Stomach (tissue), 19 donors: ENCODE measurements at regions of chr17 and their contacts with region 1.

Region 1: GRCh38 chr17:28494445-28495188 is 11.5 kb upstream of the FOXN1 start:
- DNase-seq: peak; percentile 80 to 89
- H3K4me3 ChIP-seq: no peak overlapping the region
- H3K27ac ChIP-seq: no peak overlapping the region
- H3K4me1 ChIP-seq: peaks cover 0 to 14% (median 7%) of the 10 kb centered on the region in 4 donors
- H3K27me3 ChIP-seq: peaks cover 0 to 32% (median 0%) of the 10 kb centered on the region in 3 donors
- CTCF ChIP-seq: peak in 5 of 7 experiments; percentile 76 to 94 (median 86)
- EP300 ChIP-seq: no peak
- POLR2A ChIP-seq: no peak

Region 2: GRCh38 chr17:28327031-28327607 is 167.5 kb before region 1 on chr17:
- intact Hi-C with region 1: no loop called
- DNase-seq: peak in 1 of 2 donors; percentile 16
- H3K4me3 ChIP-seq: no peak overlapping the region
- H3K27ac ChIP-seq: peak overlapping the region; percentile 12 to 81 (median 68)
- H3K4me1 ChIP-seq: peaks cover 16 to 54% (median 26%) of the 10 kb centered on the region in 4 donors
- H3K27me3 ChIP-seq: no peaks in the 10 kb centered on the region
- CTCF ChIP-seq: no peak
- EP300 ChIP-seq: no peak
- POLR2A ChIP-seq: no peak

Region 3: GRCh38 chr17:28536532-28537238 is 42.1 kb after region 1 on chr17:
- intact Hi-C with region 1: loop called (anchors 5 kb)
- DNase-seq: no peak
- H3K4me3 ChIP-seq: no peak overlapping the region
- H3K27ac ChIP-seq: no peak overlapping the region
- H3K4me1 ChIP-seq: peaks cover 3 to 24% (median 13%) of the 10 kb centered on the region in 4 donors
- H3K27me3 ChIP-seq: peaks cover 0 to 3% (median 0%) of the 10 kb centered on the region in 3 donors
- CTCF ChIP-seq: no peak
- EP300 ChIP-seq: no peak
- POLR2A ChIP-seq: no peak

Region 4: DNA sequence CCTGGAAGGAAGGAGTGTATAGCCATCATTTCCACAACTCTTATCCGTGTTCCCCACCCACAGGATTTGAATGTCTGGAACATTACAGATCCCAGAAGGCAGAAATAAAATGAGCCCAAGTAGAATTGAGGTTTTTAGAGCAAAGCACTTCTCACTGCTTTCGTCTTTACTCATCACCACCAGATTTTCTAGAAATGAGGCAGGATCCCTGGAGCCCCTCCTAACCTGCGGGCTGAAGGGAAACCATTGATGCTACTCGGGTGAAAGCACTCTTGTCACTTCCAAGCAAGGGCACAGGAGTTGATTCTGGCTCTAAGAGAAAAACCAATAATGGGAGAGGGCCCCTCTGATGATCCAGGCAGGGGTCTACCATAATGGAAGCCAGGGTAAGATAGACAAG is 84.9 kb after region 1 on chr17:
- intact Hi-C with region 1: no loop called
- DNase-seq: no peak
- H3K4me3 ChIP-seq: no peak overlapping the region
- H3K27ac ChIP-seq: no peak overlapping the region
- H3K4me1 ChIP-seq: peaks cover 5 to 21% (median 10%) of the 10 kb centered on the region in 4 donors
- H3K27me3 ChIP-seq: no peaks in the 10 kb centered on the region
- CTCF ChIP-seq: no peak
- EP300 ChIP-seq: no peak
- POLR2A ChIP-seq: no peak

Region 5: GRCh38 chr17:28644985-28645939 is 150.6 kb after region 1 on chr17 and contains the start of gene BLTP2:
- intact Hi-C with region 1: no loop called
- DNase-seq: peak; percentile 97 to 99
- H3K4me3 ChIP-seq: peak within 1 kb of the TSS; percentile 87 to 99 (median 90)
- H3K27ac ChIP-seq: peak within 1 kb of the TSS; percentile 93 to 97 (median 94)
- H3K4me1 ChIP-seq: peaks cover 25 to 50% (median 49%) of the 10 kb centered on the region in 4 donors
- H3K27me3 ChIP-seq: no peaks in the 10 kb centered on the region
- CTCF ChIP-seq: peak in 1 of 7 experiments; percentile 13
- EP300 ChIP-seq: no peak
- POLR2A ChIP-seq: peak in 2 of 4 donors; percentile 17 to 50
- total RNA-seq, gene BLTP2: 62.4 to 221 (median 194) TPM